ENCODE measurements at regions of chr17 and their contacts with region 1.

Region 1: GRCh38 chr17:33674685-33675084 is 381.6 kb upstream of the ASIC2 start:
- DNase-seq: peak; percentile 78
- ATAC-seq: peak; percentile 97
- H3K4me3 Mint-ChIP-seq: no peak overlapping the region
- H3K27ac Mint-ChIP-seq: no peak overlapping the region
- H3K4me1 Mint-ChIP-seq: no peaks in the 10 kb centered on the region
- H3K27me3 Mint-ChIP-seq: peaks cover 3% of the 10 kb centered on the region
- CTCF ChIP-seq: peak; percentile 36; the same call in 1 of the 2 replicates

Region 2: GRCh38 chr17:33520426-33521330 is 154.0 kb before region 1 on chr17:
- CTCF ChIA-PET with region 1: interaction called, 32 read pairs
- POLR2A ChIA-PET with region 1: no interaction called
- DNase-seq: peak; percentile 85
- ATAC-seq: peak; percentile 82
- H3K4me3 Mint-ChIP-seq: no peak overlapping the region
- H3K27ac Mint-ChIP-seq: no peak overlapping the region
- H3K4me1 Mint-ChIP-seq: peaks cover 2% of the 10 kb centered on the region; the same call in 1 of the 2 replicates
- H3K27me3 Mint-ChIP-seq: no peaks in the 10 kb centered on the region; the same call in 1 of the 2 replicates
- CTCF ChIP-seq: peak; percentile 70

Region 3: GRCh38 chr17:33657181-33657580 is 17.5 kb before region 1 on chr17:
- CTCF ChIA-PET with region 1: interaction called, 40 read pairs
- POLR2A ChIA-PET with region 1: no interaction called
- DNase-seq: no peak
- ATAC-seq: no peak
- H3K4me3 Mint-ChIP-seq: no peak overlapping the region
- H3K27ac Mint-ChIP-seq: no peak overlapping the region
- H3K4me1 Mint-ChIP-seq: no peaks in the 10 kb centered on the region
- H3K27me3 Mint-ChIP-seq: peaks cover 18% of the 10 kb centered on the region
- CTCF ChIP-seq: no peak

Region 4: DNA sequence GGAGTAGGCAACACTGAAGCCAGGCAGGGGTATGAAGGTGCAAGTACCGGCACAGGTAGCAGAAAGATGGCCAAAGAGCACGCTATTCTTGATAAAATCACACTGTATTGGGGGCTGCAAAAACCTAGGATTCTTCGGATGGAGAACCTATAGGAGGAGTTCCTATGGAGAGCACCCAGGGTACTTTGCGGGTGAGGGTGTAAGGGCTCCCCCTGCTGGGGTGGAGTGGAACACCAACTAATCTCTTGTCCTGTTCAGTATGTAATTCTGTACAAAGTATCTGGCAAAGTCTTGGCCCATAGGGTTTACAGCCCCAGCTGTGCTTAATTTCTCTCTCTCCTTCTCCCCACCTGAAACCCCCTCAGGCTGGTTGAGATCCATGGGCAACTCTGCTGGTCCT is 11.5 kb after region 1 on chr17:
- CTCF ChIA-PET with region 1: interaction called, 21 read pairs
- POLR2A ChIA-PET with region 1: no interaction called
- DNase-seq: peak; percentile 62
- ATAC-seq: peak; percentile 68
- H3K4me3 Mint-ChIP-seq: no peak overlapping the region
- H3K27ac Mint-ChIP-seq: no peak overlapping the region
- H3K4me1 Mint-ChIP-seq: no peaks in the 10 kb centered on the region
- H3K27me3 Mint-ChIP-seq: peaks cover 11% of the 10 kb centered on the region; the same call in 1 of the 2 replicates
- CTCF ChIP-seq: peak; percentile 50

Region 5: DNA sequence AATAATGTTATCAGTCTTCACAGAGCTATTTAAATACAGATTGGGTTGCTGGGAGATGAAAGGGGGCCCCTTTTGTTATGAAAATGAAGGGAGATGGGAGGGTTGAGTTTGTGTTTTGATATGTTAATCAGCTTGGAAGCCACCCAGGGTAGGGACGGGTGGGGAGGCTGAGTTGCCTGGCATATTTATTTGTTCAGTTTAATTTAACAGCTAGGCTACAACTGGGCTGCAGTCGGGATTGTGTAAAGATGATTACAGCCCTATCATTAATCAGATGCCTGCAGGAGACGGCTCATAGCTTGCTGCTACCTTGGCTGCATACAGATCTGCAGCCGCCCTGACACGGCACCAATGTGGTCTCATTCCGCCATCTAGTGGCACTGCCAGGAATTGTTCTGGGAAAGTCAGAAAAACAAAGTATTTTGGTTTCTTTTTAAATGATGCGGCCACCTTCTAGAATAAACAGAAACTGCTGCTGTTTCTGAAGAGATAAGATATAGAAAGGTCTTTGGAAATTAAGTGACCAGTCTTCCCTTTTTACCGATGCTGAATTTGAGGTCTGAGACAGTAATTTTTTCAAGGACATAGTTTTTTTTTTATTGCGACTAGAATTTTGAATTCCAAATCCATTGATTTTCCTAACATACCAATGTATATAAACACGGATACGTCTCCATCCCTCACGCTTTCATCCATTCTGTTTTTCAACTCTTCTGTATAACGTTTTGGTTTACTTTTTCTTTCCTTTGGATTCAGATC is 76.4 kb after region 1 on chr17:
- CTCF ChIA-PET with region 1: interaction called, 30 read pairs
- POLR2A ChIA-PET with region 1: no interaction called
- DNase-seq: peak; percentile 78
- ATAC-seq: peak; percentile 88
- H3K4me3 Mint-ChIP-seq: peak overlapping the region; percentile 68
- H3K27ac Mint-ChIP-seq: peak overlapping the region; percentile 85
- H3K4me1 Mint-ChIP-seq: peaks cover 38% of the 10 kb centered on the region
- H3K27me3 Mint-ChIP-seq: peaks cover 92% of the 10 kb centered on the region
- CTCF ChIP-seq: peak; percentile 93

Region 6: GRCh38 chr17:33769066-33769465 is 94.4 kb after region 1 on chr17:
- CTCF ChIA-PET with region 1: no interaction called
- POLR2A ChIA-PET with region 1: no interaction called
- DNase-seq: no peak
- ATAC-seq: no peak
- H3K4me3 Mint-ChIP-seq: no peak overlapping the region
- H3K27ac Mint-ChIP-seq: no peak overlapping the region
- H3K4me1 Mint-ChIP-seq: no peaks in the 10 kb centered on the region
- H3K27me3 Mint-ChIP-seq: peaks cover 2% of the 10 kb centered on the region; the same call in 1 of the 2 replicates
- CTCF ChIP-seq: no peak

Region 7: GRCh38 chr17:33794266-33794665 is 119.6 kb after region 1 on chr17:
- CTCF ChIA-PET with region 1: no interaction called
- POLR2A ChIA-PET with region 1: no interaction called
- DNase-seq: no peak
- ATAC-seq: no peak
- H3K4me3 Mint-ChIP-seq: no peak overlapping the region
- H3K27ac Mint-ChIP-seq: no peak overlapping the region; the same call in 1 of the 2 replicates
- H3K4me1 Mint-ChIP-seq: peaks cover 15% of the 10 kb centered on the region
- H3K27me3 Mint-ChIP-seq: peaks cover 6% of the 10 kb centered on the region
- CTCF ChIP-seq: no peak

Measured in WTC11 (cell line).